ENCODE measurements at regions of chr14 and their contacts with region 1.

Region 1: DNA sequence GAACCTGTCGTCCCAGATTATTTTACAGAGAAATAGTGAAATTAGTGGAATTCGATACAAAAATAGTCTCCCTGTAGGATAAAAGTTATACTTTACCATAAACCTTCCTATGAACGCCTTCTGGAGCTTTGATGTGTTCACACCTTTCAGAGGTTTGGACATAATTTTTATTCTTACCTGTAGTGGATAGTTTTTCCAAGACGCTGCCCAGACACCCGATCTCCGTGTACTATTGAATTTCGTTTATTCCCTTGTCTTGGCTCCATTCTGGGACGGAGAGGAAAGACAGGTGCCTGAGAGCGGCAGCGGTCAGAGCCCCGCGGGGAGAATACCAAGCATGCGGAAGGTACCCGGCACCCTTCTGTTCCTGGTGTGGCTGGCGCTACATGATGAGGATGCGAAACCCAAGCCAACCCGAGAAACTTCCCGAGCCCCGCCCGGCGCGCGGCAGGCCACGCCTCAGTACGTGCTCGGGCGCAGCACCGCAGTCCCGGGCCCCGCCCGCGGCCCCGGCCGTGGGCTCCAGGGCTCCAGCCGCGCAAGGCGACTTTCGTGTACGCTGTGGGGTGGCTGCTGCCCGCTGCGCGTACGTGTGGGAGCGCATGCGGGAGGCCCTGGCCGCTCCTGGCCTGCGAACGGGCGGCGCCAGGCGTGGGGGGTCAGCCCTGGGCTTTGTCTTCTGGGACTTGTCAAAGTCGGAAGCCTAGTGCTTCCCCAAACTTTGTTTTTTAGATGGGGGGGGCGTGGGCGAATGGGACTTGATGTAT is 11.3 kb upstream of the SNAPC1 start:
- DNase-seq: peak; percentile 86 to 90
- ATAC-seq: peak; percentile 92 to 94
- H3K4me3 ChIP-seq: peak overlapping the region; percentile 58 to 73 (median 70)
- H3K27ac ChIP-seq: peak overlapping the region; percentile 78 to 93 (median 91)
- H3K4me1 ChIP-seq: peaks cover 24 to 40% of the 10 kb centered on the region in 2 donors
- H3K27me3 ChIP-seq: no peaks in the 10 kb centered on the region
- CTCF ChIP-seq: no peak
- POLR2A ChIP-seq: peak; percentile 83 to 90

Region 2: DNA sequence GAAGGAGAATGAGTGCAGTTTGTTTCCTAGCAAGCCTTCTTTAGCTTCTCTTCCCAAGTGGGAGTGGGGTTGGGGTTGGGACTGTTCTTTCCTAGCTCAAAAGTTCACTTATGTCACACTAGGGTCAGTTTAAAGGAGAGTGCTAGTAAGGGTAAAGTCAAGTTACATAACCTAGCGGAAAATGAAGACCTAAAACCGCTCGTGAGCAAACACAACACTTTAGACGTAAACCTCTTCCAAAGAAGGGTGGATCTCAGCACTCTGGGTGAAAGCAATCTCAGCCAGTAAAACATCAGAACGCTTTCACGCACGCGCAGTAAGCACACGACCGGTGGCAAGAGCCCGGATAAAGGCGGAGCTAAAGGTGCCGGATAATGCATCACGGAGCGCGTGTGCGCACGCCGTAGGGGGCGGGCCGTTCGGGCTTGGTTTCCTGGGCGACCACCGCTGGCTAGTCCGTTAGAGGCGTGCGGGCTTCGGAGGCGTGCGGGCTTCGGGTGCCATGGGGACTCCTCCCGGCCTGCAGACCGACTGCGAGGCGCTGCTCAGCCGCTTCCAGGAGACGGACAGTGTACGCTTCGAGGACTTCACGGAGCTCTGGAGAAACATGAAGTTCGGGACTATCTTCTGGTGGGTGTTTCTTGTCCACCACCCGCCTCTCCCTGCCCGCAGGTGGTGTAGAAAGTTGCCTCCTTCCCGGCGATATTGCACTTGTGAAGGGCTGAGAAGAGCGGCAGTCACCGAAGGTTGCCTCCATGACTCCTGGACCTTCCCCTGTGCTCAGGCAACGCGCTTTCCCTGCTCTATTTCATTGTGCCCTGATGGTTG is 11.3 kb after region 1 on chr14 and contains the start of gene SNAPC1:
- in situ Hi-C with region 1: no loop called
- intact Hi-C with region 1: loop called (anchors 1 kb)
- DNase-seq: peak; percentile 96
- ATAC-seq: peak; percentile 97 to 99
- H3K4me3 ChIP-seq: peak within 1 kb of the TSS; percentile 79 to 87 (median 82)
- H3K27ac ChIP-seq: peak within 1 kb of the TSS; percentile 88 to 95 (median 89)
- H3K4me1 ChIP-seq: peaks cover 38 to 46% of the 10 kb centered on the region in 2 donors
- H3K27me3 ChIP-seq: no peaks in the 10 kb centered on the region
- CTCF ChIP-seq: no peak
- POLR2A ChIP-seq: peak; percentile 87 to 96
- total RNA-seq, gene SNAPC1: 2.0 to 3.7 (median 3.0) TPM

Region 3: DNA sequence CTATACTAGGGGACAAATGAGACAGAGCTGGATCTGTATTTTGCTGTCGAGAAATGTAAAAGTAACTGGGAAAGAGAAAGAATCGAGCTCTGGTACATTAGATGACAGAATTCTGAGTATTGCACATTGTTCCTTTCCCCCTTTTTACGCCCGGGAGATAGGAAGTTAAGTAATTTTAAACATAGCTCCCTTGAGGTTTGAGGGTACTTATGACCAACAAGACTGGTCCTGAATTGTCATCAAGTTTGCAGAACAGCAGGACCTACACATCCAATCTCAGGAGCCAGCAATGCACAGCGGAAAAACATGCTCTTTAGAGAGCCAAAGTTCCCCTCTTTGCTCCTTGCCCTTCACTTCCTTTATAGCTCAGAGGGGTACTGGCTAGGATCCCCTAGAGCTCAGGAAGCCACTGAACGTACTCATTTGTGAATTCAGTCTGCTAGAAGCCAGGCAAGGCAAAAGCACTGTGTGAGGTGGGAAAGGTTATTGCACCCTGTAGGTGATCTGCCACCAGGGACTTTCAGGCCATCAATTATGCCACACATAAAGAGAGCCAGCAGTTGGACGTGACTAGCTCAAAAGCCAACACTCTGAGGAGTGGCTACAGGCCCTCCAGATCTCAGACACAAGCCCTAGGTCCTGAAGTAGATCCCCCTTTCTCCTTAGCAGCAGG is 960.6 kb after region 1 on chr14:
- in situ Hi-C with region 1: no loop called
- intact Hi-C with region 1: no loop called
- DNase-seq: no peak
- ATAC-seq: no peak
- H3K4me3 ChIP-seq: no peak overlapping the region
- H3K27ac ChIP-seq: no peak overlapping the region
- H3K4me1 ChIP-seq: no peaks in the 10 kb centered on the region
- H3K27me3 ChIP-seq: no peaks in the 10 kb centered on the region
- CTCF ChIP-seq: no peak
- POLR2A ChIP-seq: no peak